Kidney (tissue), 22 donors: ENCODE measurements at regions of chr5 and their contacts with region 1.

Region 1: GRCh38 chr5:66757188-66757833 is 161.1 kb downstream of the MAST4 start:
- DNase-seq: peak in 3 of 5 donors; percentile 52 to 89 (median 79)
- H3K4me3 ChIP-seq: no peak overlapping the region
- H3K27ac ChIP-seq: no peak overlapping the region
- H3K4me1 ChIP-seq: no peaks in the 10 kb centered on the region
- H3K27me3 ChIP-seq: no peaks in the 10 kb centered on the region
- CTCF ChIP-seq: peak; percentile 60

Region 2: DNA sequence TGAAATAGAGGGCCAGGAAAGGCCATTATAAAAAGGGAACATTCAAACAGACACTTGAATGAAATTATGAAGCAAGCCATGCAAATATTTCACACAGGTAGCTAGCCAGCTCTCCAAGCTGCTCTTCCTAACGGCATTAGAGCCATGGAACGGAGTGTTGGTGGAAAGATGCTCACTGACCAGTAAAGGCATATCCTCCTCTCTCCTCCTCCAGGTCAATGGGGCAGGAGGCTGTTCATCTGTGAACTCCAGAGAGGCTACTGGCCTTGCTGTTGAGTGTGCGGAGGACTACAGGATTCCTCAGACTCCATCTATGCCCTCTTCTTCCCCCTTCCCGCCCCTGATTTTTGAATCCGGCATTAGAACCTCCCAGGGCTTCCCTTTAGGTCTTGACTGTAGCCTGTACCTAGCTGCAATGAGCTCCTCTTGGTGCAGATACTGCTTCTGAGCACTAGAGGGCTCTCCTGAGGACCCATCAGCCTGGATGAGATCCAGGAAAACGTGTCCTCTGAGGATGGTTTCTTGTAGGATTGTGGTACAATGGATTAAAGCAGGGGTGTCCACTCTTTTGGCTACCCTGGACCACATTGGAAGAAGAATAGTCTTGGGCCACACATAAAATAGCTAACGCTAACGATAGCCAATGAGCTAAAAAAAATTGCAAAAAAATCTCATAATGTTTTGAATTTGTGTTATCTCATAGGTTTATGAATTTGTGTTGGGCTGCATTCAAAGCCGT is 451.0 kb before region 1 on chr5:
- intact Hi-C with region 1: loop called (anchors 5 kb)
- DNase-seq: peak in 4 of 5 donors; percentile 64 to 85 (median 72)
- H3K4me3 ChIP-seq: no peak overlapping the region
- H3K27ac ChIP-seq: no peak overlapping the region
- H3K4me1 ChIP-seq: peaks cover 0 to 2% (median 0%) of the 10 kb centered on the region in 3 donors
- H3K27me3 ChIP-seq: no peaks in the 10 kb centered on the region
- CTCF ChIP-seq: peak; percentile 88